WTC11 (cell line): ENCODE measurements at regions of chr19 and their contacts with region 1.

Region 1: DNA sequence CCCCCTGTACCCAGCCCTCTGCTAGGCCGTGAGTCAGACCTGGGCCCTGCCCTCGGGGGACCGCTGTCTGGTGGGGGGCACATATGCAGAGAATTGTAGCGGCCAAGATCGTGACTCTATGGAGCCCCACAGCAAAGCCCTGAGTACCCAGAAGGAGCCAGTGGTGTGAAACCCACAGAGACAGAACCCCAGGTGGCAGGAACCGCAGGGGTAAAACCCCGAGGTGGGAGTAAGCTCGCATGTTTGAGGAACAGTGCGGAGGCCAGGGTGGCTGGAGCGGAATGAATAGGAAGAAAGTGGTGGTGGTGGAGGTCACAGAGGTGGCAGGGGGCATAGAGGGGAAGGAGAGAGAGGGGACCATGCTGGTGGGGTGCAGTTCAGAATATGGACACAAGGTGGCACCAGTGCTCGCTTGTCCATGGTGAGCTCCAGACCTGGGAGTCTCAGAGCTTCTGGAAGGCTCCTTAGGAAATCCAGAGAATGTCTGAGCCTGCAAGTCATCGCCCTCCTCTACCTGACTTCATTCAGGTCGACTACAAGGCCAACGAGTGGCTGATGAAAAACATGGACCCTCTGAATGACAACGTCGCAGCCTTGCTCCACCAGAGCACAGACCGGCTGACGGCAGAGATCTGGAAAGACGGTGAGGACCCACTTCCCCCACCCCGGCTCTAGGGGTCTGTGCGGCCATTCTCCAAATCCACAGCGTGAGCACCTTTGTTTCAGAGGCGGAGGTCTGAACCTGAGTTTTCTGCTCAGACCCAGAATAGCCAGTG is 48.9 kb downstream of the MYH14 start:
- DNase-seq: peak; percentile 82
- ATAC-seq: peak; percentile 88
- H3K4me3 Mint-ChIP-seq: no peak overlapping the region
- H3K27ac Mint-ChIP-seq: no peak overlapping the region
- H3K4me1 Mint-ChIP-seq: no peaks in the 10 kb centered on the region
- H3K27me3 Mint-ChIP-seq: peaks cover 9% of the 10 kb centered on the region
- CTCF ChIP-seq: peak; percentile 82

Region 2: GRCh38 chr19:50203281-50204080 is 48.8 kb before region 1 on chr19 and contains the start of gene MYH14:
- CTCF ChIA-PET with region 1: interaction called, 12 read pairs
- POLR2A ChIA-PET with region 1: no interaction called
- DNase-seq: peak; percentile 96
- ATAC-seq: peak; percentile 71
- H3K4me3 Mint-ChIP-seq: peak within 1 kb of the TSS; percentile 65
- H3K27ac Mint-ChIP-seq: no peak within 1 kb of the TSS
- H3K4me1 Mint-ChIP-seq: peaks cover 13% of the 10 kb centered on the region
- H3K27me3 Mint-ChIP-seq: peaks cover 46% of the 10 kb centered on the region
- CTCF ChIP-seq: no peak
- total RNA-seq, gene MYH14: 25.8 to 33.5 TPM (median 31.2 TPM) in 3 replicates

Region 3: GRCh38 chr19:50214761-50215575 is 37.3 kb before region 1 on chr19:
- CTCF ChIA-PET with region 1: interaction called, 10 read pairs
- POLR2A ChIA-PET with region 1: no interaction called
- DNase-seq: peak; percentile 55
- ATAC-seq: peak; percentile 61; the same call in 1 of the 2 replicates
- H3K4me3 Mint-ChIP-seq: no peak overlapping the region
- H3K27ac Mint-ChIP-seq: no peak overlapping the region
- H3K4me1 Mint-ChIP-seq: peaks cover 11% of the 10 kb centered on the region
- H3K27me3 Mint-ChIP-seq: no peaks in the 10 kb centered on the region
- CTCF ChIP-seq: no peak

Region 4: GRCh38 chr19:50239921-50240590 is 12.2 kb before region 1 on chr19:
- CTCF ChIA-PET with region 1: interaction called, 53 read pairs
- POLR2A ChIA-PET with region 1: interaction called, 3 read pairs
- DNase-seq: no peak
- ATAC-seq: no peak
- H3K4me3 Mint-ChIP-seq: no peak overlapping the region
- H3K27ac Mint-ChIP-seq: peak overlapping the region; percentile 49
- H3K4me1 Mint-ChIP-seq: peaks cover 22% of the 10 kb centered on the region
- H3K27me3 Mint-ChIP-seq: no peaks in the 10 kb centered on the region
- CTCF ChIP-seq: no peak

Region 5: GRCh38 chr19:50266896-50267295 is 14.6 kb after region 1 on chr19:
- CTCF ChIA-PET with region 1: interaction called, 34 read pairs
- POLR2A ChIA-PET with region 1: no interaction called
- DNase-seq: peak; percentile 96
- ATAC-seq: peak; percentile 99
- H3K4me3 Mint-ChIP-seq: peak overlapping the region; percentile 32
- H3K27ac Mint-ChIP-seq: no peak overlapping the region
- H3K4me1 Mint-ChIP-seq: peaks cover 8% of the 10 kb centered on the region
- H3K27me3 Mint-ChIP-seq: no peaks in the 10 kb centered on the region
- CTCF ChIP-seq: no peak

Region 6: GRCh38 chr19:50315773-50316448 is 63.6 kb after region 1 on chr19:
- CTCF ChIA-PET with region 1: interaction called, 12 read pairs
- POLR2A ChIA-PET with region 1: no interaction called
- DNase-seq: peak; percentile 75
- ATAC-seq: peak; percentile 24
- H3K4me3 Mint-ChIP-seq: peak overlapping the region; percentile 82
- H3K27ac Mint-ChIP-seq: peak overlapping the region; percentile 98
- H3K4me1 Mint-ChIP-seq: peaks cover 30% of the 10 kb centered on the region
- H3K27me3 Mint-ChIP-seq: peaks cover 6% of the 10 kb centered on the region
- CTCF ChIP-seq: no peak

Region 7: GRCh38 chr19:50329146-50329925 is 77.0 kb after region 1 on chr19 and contains the start of gene KCNC3:
- CTCF ChIA-PET with region 1: interaction called, 22 read pairs
- POLR2A ChIA-PET with region 1: no interaction called
- DNase-seq: peak; percentile 100
- ATAC-seq: peak; percentile 62
- H3K4me3 Mint-ChIP-seq: peak within 1 kb of the TSS; percentile 85
- H3K27ac Mint-ChIP-seq: peak within 1 kb of the TSS; percentile 98
- H3K4me1 Mint-ChIP-seq: peaks cover 49% of the 10 kb centered on the region
- H3K27me3 Mint-ChIP-seq: peaks cover 38% of the 10 kb centered on the region
- CTCF ChIP-seq: no peak
- total RNA-seq, gene KCNC3: 8.5 to 10.1 TPM (median 10.0 TPM) in 3 replicates

Region 8: DNA sequence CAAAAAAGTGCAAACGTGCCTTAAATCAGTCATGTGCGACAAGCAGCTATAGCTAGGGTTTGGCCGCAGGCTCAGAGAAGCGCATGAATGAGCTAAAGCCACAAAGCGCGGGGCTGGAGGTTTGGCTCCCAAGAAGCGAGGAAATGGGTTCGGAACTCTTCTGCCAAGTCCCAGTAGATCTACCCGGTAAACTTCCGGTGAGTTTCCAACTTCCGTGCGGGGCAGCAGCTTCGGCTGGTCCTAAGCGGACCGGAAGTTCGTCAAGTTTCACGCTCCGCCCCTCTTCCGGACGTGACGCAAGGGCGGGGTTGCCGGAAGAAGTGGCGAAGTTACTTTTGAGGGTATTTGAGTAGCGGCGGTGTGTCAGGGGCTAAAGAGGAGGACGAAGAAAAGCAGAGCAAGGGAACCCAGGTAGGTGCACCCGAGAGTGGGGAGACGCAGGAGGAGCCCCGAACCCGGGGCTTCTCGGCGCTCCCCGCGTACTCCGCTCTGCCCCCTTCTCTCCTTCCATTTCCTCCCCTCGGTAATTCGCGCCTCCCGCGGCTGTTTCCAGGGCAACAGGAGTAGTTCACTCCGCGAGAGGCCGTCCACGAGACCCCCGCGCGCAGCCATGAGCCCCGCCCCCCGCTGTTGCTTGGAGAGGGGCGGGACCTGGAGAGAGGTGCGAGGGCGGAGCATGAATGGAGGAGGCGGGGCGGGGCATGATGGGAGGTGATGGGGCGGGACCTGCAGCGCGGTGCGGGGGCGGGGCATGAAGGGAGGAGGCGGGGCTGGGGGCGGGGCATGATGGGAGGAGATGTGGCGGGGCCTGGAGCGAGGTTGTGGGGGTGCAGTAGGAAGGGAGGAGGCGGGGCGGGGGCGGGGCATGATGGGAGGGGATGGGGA is 124.1 kb after region 1 on chr19 and contains the start of gene NR1H2:
- CTCF ChIA-PET with region 1: no interaction called
- POLR2A ChIA-PET with region 1: no interaction called
- DNase-seq: peak; percentile 95
- ATAC-seq: peak; percentile 80
- H3K4me3 Mint-ChIP-seq: peak within 1 kb of the TSS; percentile 99
- H3K27ac Mint-ChIP-seq: peak within 1 kb of the TSS; percentile 100
- H3K4me1 Mint-ChIP-seq: peaks cover 3% of the 10 kb centered on the region; the same call in 1 of the 2 replicates
- H3K27me3 Mint-ChIP-seq: no peaks in the 10 kb centered on the region; the same call in none of the 2 replicates
- CTCF ChIP-seq: no peak
- total RNA-seq, gene NR1H2: 40.5 to 45.8 TPM (median 41.0 TPM) in 3 replicates

Region 9: DNA sequence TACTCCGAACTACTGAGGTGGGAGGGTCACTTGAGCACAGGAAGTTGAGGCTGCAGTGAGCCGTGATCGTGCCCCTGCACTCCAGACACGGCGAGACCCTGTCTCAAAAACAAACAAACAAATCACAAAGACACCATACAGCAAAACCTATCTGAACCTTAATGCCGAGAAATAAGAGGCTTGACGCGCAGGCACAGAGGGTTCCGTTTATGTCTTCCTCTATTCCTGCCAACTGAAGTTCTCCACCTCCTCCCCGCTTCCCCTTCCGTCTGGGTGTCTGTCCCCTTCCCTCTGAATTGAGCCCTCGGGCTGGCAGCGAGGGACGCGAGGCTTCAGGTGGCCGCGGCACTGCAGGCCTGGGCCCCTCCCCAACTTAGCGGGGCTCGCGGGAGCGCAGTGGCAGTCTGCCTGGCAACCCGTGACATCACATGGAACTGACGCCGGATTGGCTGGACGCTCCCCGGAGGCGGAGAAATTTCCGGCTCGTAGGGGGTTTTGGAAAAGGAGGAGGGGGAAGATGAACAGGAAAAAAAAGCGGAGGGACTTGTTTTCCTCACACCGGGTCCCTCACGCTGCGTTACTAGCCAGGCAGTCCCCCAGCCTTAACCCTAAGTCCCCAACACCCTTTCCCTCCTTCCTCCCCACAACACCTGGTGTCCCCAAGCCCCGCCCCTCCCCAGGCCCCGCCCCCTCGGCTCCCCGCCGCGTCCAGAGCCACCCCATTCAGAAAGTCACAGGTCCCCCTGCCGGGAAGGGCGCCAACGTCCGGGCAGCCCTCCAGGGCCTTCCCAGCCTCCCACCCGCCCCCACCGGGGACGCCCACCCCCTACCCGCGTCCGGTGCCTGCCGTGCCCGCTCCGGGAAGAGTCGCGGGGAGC is 179.3 kb after region 1 on chr19:
- CTCF ChIA-PET with region 1: no interaction called
- POLR2A ChIA-PET with region 1: no interaction called
- DNase-seq: peak; percentile 93
- ATAC-seq: peak; percentile 87
- H3K4me3 Mint-ChIP-seq: peak overlapping the region; percentile 78
- H3K27ac Mint-ChIP-seq: peak overlapping the region; percentile 72; the same call in 1 of the 2 replicates
- H3K4me1 Mint-ChIP-seq: peaks cover 31% of the 10 kb centered on the region
- H3K27me3 Mint-ChIP-seq: peaks cover 40% of the 10 kb centered on the region
- CTCF ChIP-seq: no peak